ENCODE measurements at regions of chr20 and their contacts with region 1.

Region 1: DNA sequence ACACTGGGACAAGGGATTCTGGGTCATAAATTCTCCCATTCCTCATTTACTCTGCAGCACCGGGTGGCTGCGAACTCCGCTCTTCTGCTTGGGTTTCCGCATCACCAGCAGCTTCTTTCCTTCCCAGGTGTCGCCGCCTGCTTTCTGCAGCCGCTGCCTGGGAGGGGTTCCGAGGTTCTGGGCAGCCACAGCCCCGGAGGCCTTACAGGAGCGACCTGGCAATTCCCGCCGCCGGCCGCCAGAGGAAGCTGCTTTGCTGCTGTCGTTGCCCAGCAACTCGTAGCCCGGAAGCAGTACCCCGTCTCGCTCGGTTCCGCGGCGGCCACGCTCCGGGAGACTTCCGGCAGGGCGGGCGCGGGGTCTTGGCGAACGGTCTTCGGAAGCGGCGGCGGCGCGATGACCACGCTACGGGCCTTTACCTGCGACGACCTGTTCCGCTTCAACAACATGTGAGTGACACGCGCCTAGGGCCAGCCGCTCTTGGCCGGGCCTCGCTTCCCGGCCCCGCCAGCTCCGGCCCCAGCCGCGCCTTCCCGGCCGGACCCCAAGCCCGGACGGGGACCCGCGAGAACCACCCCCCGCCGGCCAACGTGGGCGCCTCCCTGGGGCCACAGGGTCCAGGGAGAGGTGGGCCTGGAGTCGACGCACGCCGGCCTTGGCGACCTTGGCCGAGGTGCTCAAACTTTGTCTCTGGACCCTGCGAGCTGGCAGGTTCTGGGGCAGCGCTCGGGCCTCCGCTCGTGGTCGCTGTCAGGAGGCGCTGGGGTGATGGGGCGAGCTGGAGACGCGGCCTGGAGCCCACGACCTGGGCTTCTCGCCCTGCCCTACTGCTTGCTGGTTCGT is at the start of gene NAA20:
- DNase-seq: peak; percentile 94
- ATAC-seq: peak; percentile 96
- H3K4me3 ChIP-seq: peak within 1 kb of the TSS; percentile 72 to 95 (median 82)
- H3K27ac ChIP-seq: peak within 1 kb of the TSS; percentile 82
- H3K4me1 ChIP-seq: peaks cover 76% of the 10 kb centered on the region
- H3K27me3 ChIP-seq: no peaks in the 10 kb centered on the region; a peak in 1 of 5 replicates
- CTCF ChIP-seq: peak; percentile 98
- EP300 ChIP-seq: peak in 1 of 2 experiments; percentile 36; a peak in 2 of 4 replicates
- POLR2A ChIP-seq: peak; percentile 36 to 87; a peak in 3 of 4 replicates
- RAD21 ChIP-seq: peak; percentile 89
- total RNA-seq, gene NAA20: 82.8 and 114 TPM in 2 replicates

Region 2: DNA sequence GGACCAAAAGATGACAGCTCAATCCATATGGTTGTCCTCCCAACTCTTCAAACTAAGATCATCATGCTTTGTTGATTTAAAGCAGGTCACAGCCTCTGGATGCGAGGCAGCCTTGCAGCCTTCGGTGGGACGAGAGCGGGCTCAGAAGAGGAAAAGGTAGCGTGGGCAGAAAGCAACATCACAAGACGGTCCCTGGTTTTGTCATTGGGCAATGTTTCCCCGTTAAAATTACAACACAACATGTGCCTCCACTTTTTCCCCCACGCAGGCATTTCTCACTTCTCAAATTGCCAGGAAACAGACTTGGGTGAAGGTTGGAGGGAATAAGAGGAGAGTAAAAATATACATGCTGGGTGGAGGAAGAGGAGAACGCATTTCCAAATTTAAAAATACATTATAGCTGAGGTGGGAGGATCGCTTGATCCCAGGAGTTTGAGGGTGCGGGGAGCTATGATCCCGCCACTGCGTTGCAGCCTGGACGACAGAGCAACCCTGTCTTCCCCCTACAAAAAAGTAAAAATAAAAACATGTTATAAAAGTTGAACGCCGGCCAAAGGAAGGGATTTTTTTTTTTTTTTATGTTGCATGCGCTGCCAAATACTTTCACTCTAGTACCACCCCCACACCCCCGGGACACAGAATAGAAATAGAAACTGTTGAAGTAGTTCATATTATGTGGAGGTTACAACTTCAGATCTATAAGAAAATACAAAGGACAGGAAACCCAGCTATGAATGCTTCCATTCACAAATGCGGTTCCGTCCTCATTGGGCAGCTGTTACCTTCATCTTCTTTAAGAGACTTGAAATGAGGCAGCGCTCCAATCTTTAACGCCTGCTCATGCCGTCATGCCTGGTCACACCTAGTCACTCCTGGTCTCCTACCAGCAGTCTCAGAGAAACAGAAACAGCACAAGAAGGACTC is 13.9 kb before region 1 on chr20:
- CTCF ChIA-PET with region 1: no interaction called
- POLR2A ChIA-PET with region 1: interaction called, 10 read pairs
- in situ Hi-C with region 1: no loop called
- intact Hi-C with region 1: no loop called
- DNase-seq: no peak
- ATAC-seq: no peak
- H3K4me3 ChIP-seq: peak overlapping the region in 1 of 3 experiments; percentile 53; a peak in 1 of 6 replicates
- H3K27ac ChIP-seq: peak overlapping the region; percentile 87
- H3K4me1 ChIP-seq: peaks cover 74% of the 10 kb centered on the region
- H3K27me3 ChIP-seq: no peaks in the 10 kb centered on the region
- CTCF ChIP-seq: no peak
- EP300 ChIP-seq: no peak
- POLR2A ChIP-seq: no peak
- RAD21 ChIP-seq: no peak

Measured in HepG2 (cell line).